HCT116 (cell line): ENCODE measurements at regions of chr17 and their contacts with region 1.

Region 1: GRCh38 chr17:48307814-48308411 is 122.1 kb downstream of the SKAP1 start:
- DNase-seq: peak; percentile 78
- ATAC-seq: peak; percentile 100
- H3K4me3 ChIP-seq: no peak overlapping the region
- H3K27ac ChIP-seq: no peak overlapping the region
- H3K4me1 ChIP-seq: no peaks in the 10 kb centered on the region
- H3K27me3 ChIP-seq: no peaks in the 10 kb centered on the region
- CTCF ChIP-seq: peak; percentile 81 to 99 (median 98)
- POLR2A ChIP-seq: no peak
- RAD21 ChIP-seq: peak; percentile 75

Region 2: DNA sequence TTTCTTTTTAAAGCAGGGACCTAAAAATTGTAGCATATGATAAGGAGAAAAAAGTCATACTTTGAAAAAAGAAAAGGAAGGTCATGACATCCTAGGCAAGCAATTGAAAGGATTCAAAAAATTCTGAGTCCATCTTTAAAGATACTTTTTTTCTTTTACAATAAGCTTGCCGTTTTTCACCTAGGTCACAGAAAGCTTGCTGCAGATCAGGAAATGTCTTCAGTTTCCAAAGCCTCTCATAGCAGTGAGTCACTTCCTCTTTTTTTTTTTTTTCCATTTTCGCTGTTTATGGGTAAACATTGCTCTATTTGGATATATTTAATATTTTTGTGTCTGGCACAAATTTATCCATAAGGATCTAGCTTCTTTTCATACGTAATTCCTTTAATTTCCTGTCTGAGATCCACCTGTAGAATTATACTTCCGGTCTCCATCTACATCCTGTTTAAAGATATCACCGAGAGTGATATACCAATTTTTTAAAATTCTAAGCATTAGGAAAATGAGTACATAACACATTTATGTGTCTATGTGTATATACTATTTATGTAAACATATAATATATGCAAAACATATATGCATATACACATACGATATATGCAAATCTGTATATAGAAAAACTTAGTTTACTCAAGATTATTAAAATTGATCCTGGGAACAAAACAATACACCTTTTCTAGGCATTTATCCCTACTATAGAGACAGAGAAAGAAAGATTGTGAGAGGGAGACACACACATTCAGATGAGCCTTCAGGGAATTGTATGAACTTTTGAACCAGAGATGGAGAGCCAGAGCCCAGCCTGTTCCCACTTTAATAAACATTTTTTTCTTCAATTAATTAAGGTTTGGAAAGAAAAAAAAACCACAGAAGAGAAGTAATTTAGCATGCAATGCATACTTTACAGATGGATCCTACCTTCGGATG is 12.3 kb before region 1 on chr17:
- CTCF ChIA-PET with region 1: interaction called, 41 read pairs
- POLR2A ChIA-PET with region 1: interaction called, 3 read pairs
- RAD21 ChIA-PET with region 1: no interaction called
- intact Hi-C with region 1: no loop called
- DNase-seq: no peak
- ATAC-seq: no peak
- H3K4me3 ChIP-seq: no peak overlapping the region
- H3K27ac ChIP-seq: no peak overlapping the region
- H3K4me1 ChIP-seq: peaks cover 2 to 25% of the 10 kb centered on the region in 2 experiments; a peak in 3 of 4 replicates
- H3K27me3 ChIP-seq: no peaks in the 10 kb centered on the region
- CTCF ChIP-seq: no peak
- POLR2A ChIP-seq: no peak
- RAD21 ChIP-seq: no peak

Region 3: DNA sequence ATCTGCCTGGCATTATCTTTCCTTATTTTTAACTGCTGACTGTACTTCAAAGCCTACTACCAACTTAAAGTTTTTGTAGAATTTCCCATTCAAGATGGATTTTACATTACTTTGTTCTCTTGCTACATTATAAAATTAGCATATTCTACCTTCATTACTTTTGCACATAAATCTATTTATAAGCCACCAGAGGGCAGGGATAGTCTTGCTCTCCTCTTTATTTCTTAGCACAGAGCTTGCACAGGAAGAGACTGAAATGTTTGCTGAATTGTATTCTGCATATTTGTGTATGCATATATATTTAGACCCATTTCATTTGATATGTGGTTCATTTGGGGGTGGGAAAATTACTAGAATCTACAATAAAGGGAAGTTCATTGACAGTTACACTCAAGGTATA is 14.1 kb after region 1 on chr17:
- CTCF ChIA-PET with region 1: interaction called, 27 read pairs
- POLR2A ChIA-PET with region 1: interaction called, 3 read pairs
- RAD21 ChIA-PET with region 1: no interaction called
- intact Hi-C with region 1: no loop called
- DNase-seq: no peak
- ATAC-seq: peak; percentile 66; the same call in 1 of the 2 replicates
- H3K4me3 ChIP-seq: no peak overlapping the region
- H3K27ac ChIP-seq: no peak overlapping the region
- H3K4me1 ChIP-seq: no peaks in the 10 kb centered on the region
- H3K27me3 ChIP-seq: no peaks in the 10 kb centered on the region
- CTCF ChIP-seq: peak; percentile 23 to 53 (median 35); a peak in 3 of 6 replicates
- POLR2A ChIP-seq: no peak
- RAD21 ChIP-seq: peak; percentile 53

Region 4: DNA sequence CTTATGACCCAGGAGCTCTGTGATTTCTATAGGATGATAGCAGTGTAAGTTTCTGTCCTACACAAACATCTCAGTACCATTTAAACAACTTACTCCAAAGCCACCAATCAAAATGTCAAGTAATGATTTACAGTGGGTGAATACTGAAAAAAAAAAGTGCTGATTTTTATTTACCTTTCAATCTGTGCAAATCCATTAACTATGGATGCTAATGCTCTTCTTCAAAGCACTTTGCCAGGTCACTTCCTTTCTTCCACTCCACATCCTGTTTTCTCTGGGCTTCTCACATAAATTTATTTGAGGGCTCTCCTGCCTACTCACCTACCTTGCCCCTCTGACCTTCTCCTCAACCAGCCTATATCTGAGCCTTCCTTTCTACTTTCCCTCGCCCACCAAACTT is 20.5 kb after region 1 on chr17:
- CTCF ChIA-PET with region 1: interaction called, 27 read pairs
- POLR2A ChIA-PET with region 1: interaction called, 3 read pairs
- RAD21 ChIA-PET with region 1: no interaction called
- intact Hi-C with region 1: no loop called
- DNase-seq: no peak
- ATAC-seq: no peak
- H3K4me3 ChIP-seq: no peak overlapping the region
- H3K27ac ChIP-seq: no peak overlapping the region
- H3K4me1 ChIP-seq: peaks cover 0 to 5% of the 10 kb centered on the region in 2 experiments; a peak in 1 of 4 replicates
- H3K27me3 ChIP-seq: no peaks in the 10 kb centered on the region
- CTCF ChIP-seq: no peak
- POLR2A ChIP-seq: no peak
- RAD21 ChIP-seq: no peak

Region 5: GRCh38 chr17:48335858-48336500 is 28.1 kb after region 1 on chr17:
- CTCF ChIA-PET with region 1: interaction called, 17 read pairs
- POLR2A ChIA-PET with region 1: no interaction called
- RAD21 ChIA-PET with region 1: no interaction called
- intact Hi-C with region 1: no loop called
- DNase-seq: peak; percentile 78
- ATAC-seq: peak; percentile 85
- H3K4me3 ChIP-seq: no peak overlapping the region
- H3K27ac ChIP-seq: no peak overlapping the region
- H3K4me1 ChIP-seq: peaks cover 0 to 9% of the 10 kb centered on the region in 2 experiments; a peak in 2 of 4 replicates
- H3K27me3 ChIP-seq: no peaks in the 10 kb centered on the region
- CTCF ChIP-seq: peak; percentile 64 to 93 (median 92)
- POLR2A ChIP-seq: no peak
- RAD21 ChIP-seq: peak; percentile 85

Region 6: DNA sequence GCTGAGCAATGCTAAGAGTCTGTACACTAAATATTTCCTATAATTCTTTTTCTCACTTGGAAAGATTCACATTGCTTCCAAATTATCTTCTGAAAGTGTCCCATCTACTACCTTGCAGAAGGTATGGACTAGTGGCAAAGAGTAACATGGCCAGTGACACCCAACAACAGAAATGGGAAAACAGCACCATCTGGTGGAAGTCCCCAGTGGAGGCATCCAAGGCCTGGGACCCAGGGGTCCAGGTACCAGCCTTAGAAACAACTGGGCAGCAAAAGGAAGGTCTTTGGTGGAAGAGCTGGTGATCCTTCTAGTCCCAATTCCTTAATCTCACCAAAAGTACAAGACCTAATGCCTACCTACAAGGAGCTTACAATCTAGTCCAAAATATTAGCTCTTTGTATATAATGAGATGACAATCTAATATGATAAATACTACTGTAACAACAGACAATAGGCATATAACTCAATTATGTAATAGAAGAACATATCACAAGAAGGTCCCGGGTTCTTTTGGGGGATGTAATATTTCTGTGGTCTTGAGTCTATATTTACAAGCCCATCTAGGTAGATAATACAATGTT is 66.8 kb after region 1 on chr17:
- CTCF ChIA-PET with region 1: interaction called, 5 read pairs
- POLR2A ChIA-PET with region 1: no interaction called
- RAD21 ChIA-PET with region 1: no interaction called
- intact Hi-C with region 1: loop called (anchors 5 kb)
- DNase-seq: peak; percentile 63
- ATAC-seq: peak; percentile 99
- H3K4me3 ChIP-seq: no peak overlapping the region
- H3K27ac ChIP-seq: no peak overlapping the region
- H3K4me1 ChIP-seq: no peaks in the 10 kb centered on the region
- H3K27me3 ChIP-seq: no peaks in the 10 kb centered on the region
- CTCF ChIP-seq: peak; percentile 92 to 97 (median 94)
- POLR2A ChIP-seq: no peak
- RAD21 ChIP-seq: peak; percentile 91

Region 7: GRCh38 chr17:48393283-48393682 is 85.4 kb after region 1 on chr17:
- CTCF ChIA-PET with region 1: no interaction called
- POLR2A ChIA-PET with region 1: no interaction called
- RAD21 ChIA-PET with region 1: no interaction called
- intact Hi-C with region 1: no loop called
- DNase-seq: no peak
- ATAC-seq: no peak
- H3K4me3 ChIP-seq: no peak overlapping the region
- H3K27ac ChIP-seq: no peak overlapping the region
- H3K4me1 ChIP-seq: no peaks in the 10 kb centered on the region
- H3K27me3 ChIP-seq: no peaks in the 10 kb centered on the region
- CTCF ChIP-seq: no peak
- POLR2A ChIP-seq: no peak
- RAD21 ChIP-seq: no peak

Region 8: GRCh38 chr17:48618256-48618897 is 310.5 kb after region 1 on chr17:
- CTCF ChIA-PET with region 1: interaction called, 21 read pairs
- POLR2A ChIA-PET with region 1: no interaction called
- RAD21 ChIA-PET with region 1: interaction called in 1 of 2 experiments, 3 read pairs
- intact Hi-C with region 1: loop called (anchors 1 kb)
- DNase-seq: peak; percentile 74
- ATAC-seq: peak; percentile 71
- H3K4me3 ChIP-seq: peak overlapping the region; percentile 80 to 90
- H3K27ac ChIP-seq: peak overlapping the region; percentile 88
- H3K4me1 ChIP-seq: peaks cover 8 to 37% of the 10 kb centered on the region in 2 experiments; a peak in 3 of 4 replicates
- H3K27me3 ChIP-seq: no peaks in the 10 kb centered on the region
- CTCF ChIP-seq: peak; percentile 97 to 100 (median 98); a peak in 5 of 6 replicates
- POLR2A ChIP-seq: no peak
- RAD21 ChIP-seq: peak; percentile 99